ENCODE measurements at regions of chr22 and their contacts with region 1.

Region 1: DNA sequence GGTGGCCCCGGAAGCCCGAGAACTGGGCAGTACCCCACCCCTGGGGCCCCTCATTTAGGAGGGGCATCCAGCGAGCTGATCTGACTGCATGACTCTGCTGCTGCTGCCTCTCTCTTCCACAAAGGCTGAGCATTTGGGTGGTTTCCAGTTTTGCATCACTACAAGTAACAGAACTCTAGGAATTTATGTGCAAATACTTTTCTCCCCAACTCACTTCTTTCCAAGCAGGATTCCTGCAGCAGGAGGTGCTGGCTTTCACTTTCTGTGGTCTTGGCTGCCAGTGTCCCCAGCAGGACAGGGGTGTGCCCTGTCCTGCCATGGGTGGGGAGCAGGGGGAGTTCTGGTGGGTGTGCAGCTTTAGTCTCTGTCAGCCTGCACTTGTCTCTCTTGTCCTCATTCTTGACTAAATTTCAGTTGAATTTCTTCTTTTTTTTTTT is 21.2 kb downstream of the UPB1 start:
- DNase-seq: no peak
- H3K4me3 ChIP-seq: no peak overlapping the region
- H3K27ac ChIP-seq: no peak overlapping the region
- H3K4me1 ChIP-seq: peaks cover 0 to 25% (median 5%) of the 10 kb centered on the region in 3 donors
- H3K27me3 ChIP-seq: peaks cover 0 to 31% (median 0%) of the 10 kb centered on the region in 4 donors
- CTCF ChIP-seq: no peak
- POLR2A ChIP-seq: no peak

Region 2: DNA sequence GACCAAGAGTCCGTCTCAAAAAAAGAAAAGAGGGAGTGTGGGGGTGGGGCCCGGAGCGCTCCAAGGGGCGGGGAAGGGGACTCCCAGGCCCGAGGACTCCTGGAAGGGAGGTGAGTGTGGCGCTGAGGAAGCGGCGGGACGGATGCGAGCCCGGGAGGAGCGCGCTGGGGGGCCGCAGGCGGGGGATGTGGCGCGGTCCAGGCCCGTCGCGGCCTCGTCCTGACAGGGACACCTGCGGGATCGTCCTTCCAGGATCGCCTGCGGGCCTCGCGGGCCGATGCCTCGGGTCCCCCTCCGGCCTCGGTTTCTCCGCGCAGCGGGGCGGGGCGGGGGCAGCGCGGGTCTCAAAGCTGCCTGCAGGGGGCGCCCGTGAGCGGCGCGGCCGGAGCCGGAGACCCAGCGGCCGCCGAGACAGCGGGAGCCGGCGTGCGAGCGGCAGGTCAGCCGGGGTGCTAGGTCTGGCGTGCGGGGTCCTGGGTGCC is 92.8 kb before region 1 on chr22:
- intact Hi-C with region 1: loop called (anchors 5 kb)
- DNase-seq: no peak
- H3K4me3 ChIP-seq: peak overlapping the region; percentile 39 to 74 (median 50)
- H3K27ac ChIP-seq: peak overlapping the region in 2 of 4 donors; percentile 11 to 39
- H3K4me1 ChIP-seq: peaks cover 8 to 54% (median 27%) of the 10 kb centered on the region in 3 donors
- H3K27me3 ChIP-seq: peaks cover 0 to 69% (median 2%) of the 10 kb centered on the region in 4 donors
- CTCF ChIP-seq: peak; percentile 77 to 93 (median 86)
- POLR2A ChIP-seq: no peak

Region 3: DNA sequence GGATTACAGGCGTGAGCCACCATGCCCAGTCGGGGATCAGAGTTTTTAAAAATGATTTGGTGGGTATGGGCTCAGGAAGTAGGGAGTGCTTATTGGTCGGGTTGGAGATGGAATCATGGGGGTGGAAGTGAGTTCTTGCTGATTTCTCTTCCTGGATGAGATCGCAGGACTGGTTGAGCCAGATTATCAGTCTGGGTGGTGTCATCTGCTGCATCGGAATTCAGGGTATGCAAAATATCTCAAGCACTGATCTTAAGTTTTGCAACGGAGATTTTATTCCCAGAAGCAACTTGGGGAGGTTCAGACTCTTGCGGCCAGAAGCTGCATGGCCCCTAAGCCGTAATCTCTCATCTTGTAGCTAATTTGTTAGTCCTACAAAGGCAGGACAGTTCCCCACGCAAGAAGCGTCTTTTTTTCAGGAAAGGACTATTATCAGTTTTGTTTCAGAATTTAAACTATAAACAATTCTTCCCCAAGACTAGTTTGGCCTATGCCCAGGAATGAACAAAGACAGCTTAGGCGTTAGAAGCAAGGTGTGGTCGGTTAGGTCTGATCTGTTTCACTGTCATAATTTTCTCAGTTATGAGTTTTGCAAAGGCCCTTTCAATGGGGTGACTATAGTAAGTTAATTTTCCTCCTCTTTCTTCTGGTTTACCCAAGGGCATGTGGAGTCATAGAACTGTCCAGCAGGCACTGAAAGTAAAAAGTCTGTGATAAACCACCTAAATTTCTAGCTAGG is 259.6 kb after region 1 on chr22:
- intact Hi-C with region 1: no loop called
- DNase-seq: no peak
- H3K4me3 ChIP-seq: no peak overlapping the region
- H3K27ac ChIP-seq: no peak overlapping the region
- H3K4me1 ChIP-seq: peaks cover 0 to 13% (median 3%) of the 10 kb centered on the region in 3 donors
- H3K27me3 ChIP-seq: peaks cover 0 to 15% (median 0%) of the 10 kb centered on the region in 4 donors
- CTCF ChIP-seq: no peak
- POLR2A ChIP-seq: no peak